ENCODE measurements at regions of chr2 and their contacts with region 1.

Region 1: GRCh38 chr2:190017837-190018236 is 44.7 kb downstream of the MSTN start:
- DNase-seq: no peak
- H3K4me3 ChIP-seq: no peak overlapping the region
- H3K27ac ChIP-seq: no peak overlapping the region
- H3K4me1 ChIP-seq: no peaks in the 10 kb centered on the region
- H3K27me3 ChIP-seq: no peaks in the 10 kb centered on the region
- CTCF ChIP-seq: no peak
- EP300 ChIP-seq: no peak
- POLR2A ChIP-seq: no peak

Region 2: GRCh38 chr2:189997016-189997415 is 20.8 kb before region 1 on chr2:
- intact Hi-C with region 1: loop called (anchors 2 kb)
- DNase-seq: no peak
- H3K4me3 ChIP-seq: no peak overlapping the region
- H3K27ac ChIP-seq: no peak overlapping the region
- H3K4me1 ChIP-seq: no peaks in the 10 kb centered on the region
- H3K27me3 ChIP-seq: no peaks in the 10 kb centered on the region
- CTCF ChIP-seq: no peak
- EP300 ChIP-seq: no peak
- POLR2A ChIP-seq: no peak